GM10248 (cell line): ENCODE measurements at regions of chr1 and their contacts with region 1.

Region 1: GRCh38 chr1:153626922-153627796 is at the start of gene S100A13:
- DNase-seq: peak; percentile 69
- CTCF ChIP-seq: peak; percentile 66

Region 2: GRCh38 chr1:153577624-153578051 is 49.5 kb before region 1 on chr1:
- CTCF ChIA-PET with region 1: interaction called, 22 read pairs
- POLR2A ChIA-PET with region 1: interaction called, 3 read pairs
- DNase-seq: no peak
- CTCF ChIP-seq: no peak

Region 3: GRCh38 chr1:153608742-153609584 is 18.2 kb before region 1 on chr1:
- CTCF ChIA-PET with region 1: interaction called, 105 read pairs
- POLR2A ChIA-PET with region 1: no interaction called
- DNase-seq: peak; percentile 12
- CTCF ChIP-seq: no peak